ENCODE measurements at regions of chrX and their contacts with region 1.

Region 1: DNA sequence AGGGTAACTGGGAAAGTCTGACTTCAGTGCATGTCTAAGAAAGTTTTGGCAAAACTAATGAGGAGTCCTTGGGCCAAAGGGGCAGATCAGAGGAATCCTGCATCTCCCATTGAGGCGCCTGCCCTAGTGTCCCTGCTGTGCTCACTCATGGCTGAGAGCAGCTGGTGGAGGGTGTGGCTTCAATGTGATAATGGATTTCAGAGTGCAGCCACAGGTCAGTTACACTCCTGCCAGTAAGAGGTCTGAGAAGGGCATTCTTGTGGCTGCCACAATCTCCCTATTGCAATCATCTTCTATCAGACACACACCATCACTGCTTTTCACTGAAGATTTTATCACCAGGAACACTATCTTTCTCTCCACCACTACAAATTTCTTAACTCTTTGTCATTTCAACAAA is 457.1 kb downstream of the MID1IP1 start:
- DNase-seq: no peak
- ATAC-seq: no peak
- H3K4me3 ChIP-seq: no peak overlapping the region
- H3K27ac ChIP-seq: no peak overlapping the region
- H3K4me1 ChIP-seq: no peaks in the 10 kb centered on the region
- H3K27me3 ChIP-seq: no peaks in the 10 kb centered on the region
- CTCF ChIP-seq: no peak

Region 2: GRCh38 chrX:39242187-39242586 is 16.1 kb before region 1 on chrX:
- CTCF ChIA-PET with region 1: no interaction called
- POLR2A ChIA-PET with region 1: no interaction called
- in situ Hi-C with region 1: no loop called
- intact Hi-C with region 1: no loop called
- DNase-seq: no peak
- ATAC-seq: no peak
- H3K4me3 ChIP-seq: no peak overlapping the region
- H3K27ac ChIP-seq: no peak overlapping the region
- H3K4me1 ChIP-seq: no peaks in the 10 kb centered on the region
- H3K27me3 ChIP-seq: no peaks in the 10 kb centered on the region
- CTCF ChIP-seq: peak; percentile 44

Region 3: DNA sequence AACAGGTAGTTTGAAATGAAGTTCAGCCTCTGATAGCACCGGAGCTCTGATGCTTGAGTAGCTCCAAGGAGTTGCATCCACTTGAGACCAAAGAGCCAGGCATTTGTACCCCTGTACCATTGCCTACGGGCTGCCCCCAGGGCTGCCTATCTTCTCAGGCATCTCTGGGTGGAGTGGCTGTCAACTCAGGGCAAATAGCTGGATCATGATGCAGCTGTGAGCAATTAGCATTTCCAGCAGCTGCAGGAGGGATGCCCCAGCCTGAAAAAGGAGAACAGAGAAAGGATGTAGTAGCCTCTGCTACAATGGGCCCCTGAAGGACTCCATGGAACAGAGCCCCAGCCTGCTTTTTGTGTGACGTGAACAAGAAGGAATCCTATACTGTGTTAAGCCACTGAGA is 346.8 kb after region 1 on chrX:
- CTCF ChIA-PET with region 1: interaction called, 10 read pairs
- POLR2A ChIA-PET with region 1: no interaction called
- in situ Hi-C with region 1: no loop called
- intact Hi-C with region 1: no loop called
- DNase-seq: no peak
- ATAC-seq: no peak
- H3K4me3 ChIP-seq: no peak overlapping the region
- H3K27ac ChIP-seq: no peak overlapping the region
- H3K4me1 ChIP-seq: no peaks in the 10 kb centered on the region
- H3K27me3 ChIP-seq: no peaks in the 10 kb centered on the region
- CTCF ChIP-seq: no peak

Measured in Panc1 (cell line).